ENCODE measurements at regions of chr11 and their contacts with region 1.

Region 1: DNA sequence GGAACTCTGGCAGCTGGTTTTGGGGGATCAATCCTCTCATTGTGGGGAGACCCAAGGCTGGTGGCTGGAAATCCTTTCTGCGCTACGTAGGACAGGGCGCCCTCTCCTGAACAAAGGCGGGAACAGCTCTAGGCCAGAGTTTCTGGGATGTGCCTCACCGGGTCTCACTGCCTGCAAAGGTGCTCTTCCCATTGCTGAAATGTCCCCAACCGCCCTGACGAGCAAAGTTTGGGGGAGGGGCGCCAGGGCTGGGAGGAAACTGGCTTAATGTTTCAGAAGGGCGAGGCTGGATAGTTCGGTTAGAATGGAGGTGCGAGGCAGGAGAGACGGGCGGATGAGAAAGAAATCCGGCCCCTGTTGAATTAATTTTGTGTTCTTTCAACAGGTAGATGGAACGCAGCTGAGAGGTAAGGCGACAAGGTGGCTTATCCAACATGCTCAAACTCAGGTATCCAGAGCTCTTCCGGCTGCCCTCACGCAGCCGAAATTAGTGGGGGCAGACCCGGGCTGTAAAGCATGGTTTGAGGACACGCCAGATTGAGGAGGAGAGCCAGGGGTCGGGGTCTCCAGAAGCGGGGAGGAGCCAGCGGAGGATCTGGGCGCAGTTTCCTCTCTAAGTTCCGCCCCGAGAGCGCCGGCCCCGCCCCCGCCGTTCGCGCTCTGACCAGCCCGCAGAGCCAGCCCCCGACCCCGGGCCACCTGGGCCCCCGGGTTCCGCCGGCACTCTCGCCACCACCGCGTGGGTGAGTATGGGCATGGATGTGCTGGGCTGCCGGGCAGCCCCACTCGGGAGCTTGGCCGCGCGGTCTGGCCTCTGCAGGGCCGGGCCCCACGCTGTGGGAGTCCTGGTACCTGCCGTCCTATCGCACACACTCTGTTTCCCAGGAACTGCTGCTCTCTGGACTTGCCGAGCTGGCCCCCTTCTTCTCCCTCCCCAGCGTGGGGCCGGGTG is at the start of gene PGAP2:
- DNase-seq: peak; percentile 54 to 90
- H3K4me3 ChIP-seq: peak within 1 kb of the TSS; percentile 66 to 84 (median 74)
- H3K27ac ChIP-seq: peak within 1 kb of the TSS; percentile 46; the same call in 1 of the 2 replicates
- H3K4me1 ChIP-seq: peaks cover 0 to 8% (median 5%) of the 10 kb centered on the region in 4 experiments; a peak in 5 of 7 replicates
- H3K27me3 ChIP-seq: no peaks in the 10 kb centered on the region
- CTCF ChIP-seq: peak; percentile 75 to 89 (median 86)
- EP300 ChIP-seq: no peak
- POLR2A ChIP-seq: peak in 1 of 2 experiments; percentile 61; a peak in 2 of 3 replicates
- RAD21 ChIP-seq: peak; percentile 73 to 76
- total RNA-seq, gene PGAP2: 56.0 and 56.5 TPM in 2 replicates

Region 2: GRCh38 chr11:3659578-3660515 is 148.3 kb before region 1 on chr11:
- CTCF ChIA-PET with region 1: no interaction called
- POLR2A ChIA-PET with region 1: no interaction called
- DNase-seq: no peak
- H3K4me3 ChIP-seq: no peak overlapping the region
- H3K27ac ChIP-seq: no peak overlapping the region
- H3K4me1 ChIP-seq: no peaks in the 10 kb centered on the region
- H3K27me3 ChIP-seq: 0 out of 7 replicates have a peak, but pooled peaks cover 0 to 1% (median 0%) of the 10 kb centered on the region in 4 experiments
- CTCF ChIP-seq: no peak
- EP300 ChIP-seq: no peak
- POLR2A ChIP-seq: no peak
- RAD21 ChIP-seq: no peak

Region 3: GRCh38 chr11:3775736-3776406 is 32.3 kb before region 1 on chr11:
- CTCF ChIA-PET with region 1: interaction called, 27 read pairs
- POLR2A ChIA-PET with region 1: no interaction called
- DNase-seq: no peak
- H3K4me3 ChIP-seq: no peak overlapping the region
- H3K27ac ChIP-seq: no peak overlapping the region
- H3K4me1 ChIP-seq: no peaks in the 10 kb centered on the region
- H3K27me3 ChIP-seq: no peaks in the 10 kb centered on the region
- CTCF ChIP-seq: no peak
- EP300 ChIP-seq: no peak
- POLR2A ChIP-seq: no peak
- RAD21 ChIP-seq: peak in 1 of 2 experiments; percentile 12; a peak in 1 of 4 replicates

Region 4: DNA sequence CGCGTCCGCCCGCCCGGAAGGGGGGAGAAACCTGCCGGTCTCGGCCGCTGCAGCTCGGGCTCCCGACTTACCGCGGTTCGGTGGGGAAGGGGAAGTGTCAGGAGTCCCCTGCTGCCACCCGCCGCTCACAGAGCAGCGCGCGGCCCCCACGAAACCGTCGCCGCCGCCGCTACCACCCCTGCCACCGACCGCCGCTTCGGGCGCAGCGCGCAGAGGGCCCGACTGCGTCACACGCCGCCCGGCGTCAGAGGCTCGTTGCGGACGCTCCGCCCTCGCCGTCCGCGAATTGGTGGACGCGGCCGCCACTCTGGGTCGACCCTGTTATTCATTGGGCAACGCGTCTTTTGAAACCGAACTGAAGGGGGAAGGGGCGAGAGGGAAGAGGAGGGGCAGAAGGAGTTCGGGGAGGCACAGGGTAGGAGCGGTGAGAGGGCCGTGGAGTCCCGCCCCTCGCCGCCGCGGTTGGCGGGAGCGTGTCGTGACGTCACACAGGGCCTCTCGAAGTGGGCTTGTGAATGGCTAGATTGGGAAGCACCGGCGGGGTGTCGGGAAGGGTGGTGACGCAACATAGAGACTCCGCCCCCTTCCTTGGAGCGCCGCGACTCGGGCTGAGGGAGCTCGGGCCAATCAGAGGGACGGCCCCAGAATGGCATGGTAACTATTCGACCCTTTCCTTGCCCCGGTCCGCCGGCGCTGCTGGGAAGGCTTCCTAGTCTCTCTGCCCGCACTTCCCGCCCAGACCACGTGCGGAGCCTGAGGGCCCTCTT is 10.7 kb before region 1 on chr11 and contains the start of gene NUP98:
- CTCF ChIA-PET with region 1: interaction called, 81 read pairs
- POLR2A ChIA-PET with region 1: interaction called, 18 read pairs
- DNase-seq: peak; percentile 99 to 100
- H3K4me3 ChIP-seq: peak within 1 kb of the TSS; percentile 83 to 95 (median 93)
- H3K27ac ChIP-seq: peak within 1 kb of the TSS; percentile 88
- H3K4me1 ChIP-seq: peaks cover 0 to 5% (median 2%) of the 10 kb centered on the region in 4 experiments; a peak in 1 of 7 replicates
- H3K27me3 ChIP-seq: no peaks in the 10 kb centered on the region
- CTCF ChIP-seq: no peak
- EP300 ChIP-seq: no peak; a peak in 1 of 3 replicates
- POLR2A ChIP-seq: peak; percentile 90 to 97
- RAD21 ChIP-seq: no peak
- total RNA-seq, gene NUP98: 98.6 and 105 TPM in 2 replicates

Region 5: GRCh38 chr11:3834664-3835461 is 26.7 kb after region 1 on chr11:
- CTCF ChIA-PET with region 1: interaction called, 15 read pairs
- POLR2A ChIA-PET with region 1: interaction called, 3 read pairs
- DNase-seq: no peak
- H3K4me3 ChIP-seq: no peak overlapping the region
- H3K27ac ChIP-seq: no peak overlapping the region
- H3K4me1 ChIP-seq: peaks cover 8 to 26% (median 16%) of the 10 kb centered on the region in 4 experiments
- H3K27me3 ChIP-seq: no peaks in the 10 kb centered on the region
- CTCF ChIP-seq: no peak
- EP300 ChIP-seq: no peak
- POLR2A ChIP-seq: no peak
- RAD21 ChIP-seq: no peak

Region 6: GRCh38 chr11:4072668-4073285 is 264.6 kb after region 1 on chr11:
- CTCF ChIA-PET with region 1: interaction called, 35 read pairs
- POLR2A ChIA-PET with region 1: interaction called, 3 read pairs
- DNase-seq: no peak
- H3K4me3 ChIP-seq: no peak overlapping the region
- H3K27ac ChIP-seq: no peak overlapping the region
- H3K4me1 ChIP-seq: no peaks in the 10 kb centered on the region
- H3K27me3 ChIP-seq: no peaks in the 10 kb centered on the region; a peak in 1 of 7 replicates
- CTCF ChIP-seq: peak in 2 of 3 experiments; percentile 89; a peak in 3 of 4 replicates
- EP300 ChIP-seq: no peak
- POLR2A ChIP-seq: no peak
- RAD21 ChIP-seq: peak; percentile 98

Measured in H1 (cell line).